Activated CD4-positive, alpha-beta T cell treated with anti-CD3 and anti-CD28 coated beads, Interleukin-2, amount 10 ng/mL, durations not matched to agents 24 days and 14 days (primary cell): ENCODE measurements at regions of chr16 and their contacts with region 1.

Region 1: GRCh38 chr16:3880623-3881498 is at the start of gene CREBBP:
- DNase-seq: peak; percentile 97
- H3K4me3 Mint-ChIP-seq: peak within 1 kb of the TSS; percentile 84
- H3K27ac Mint-ChIP-seq: peak within 1 kb of the TSS; percentile 90
- H3K4me1 Mint-ChIP-seq: peaks cover 39% of the 10 kb centered on the region
- H3K27me3 Mint-ChIP-seq: peaks cover 11% of the 10 kb centered on the region
- total RNA-seq, gene CREBBP: 42.3 and 45.3 TPM in 2 replicates

Region 2: GRCh38 chr16:3717235-3718018 is 163.4 kb before region 1 on chr16 and contains the start of gene TRAP1:
- intact Hi-C with region 1: loop called (anchors 1 kb)
- DNase-seq: peak; percentile 97
- H3K4me3 Mint-ChIP-seq: peak within 1 kb of the TSS; percentile 94
- H3K27ac Mint-ChIP-seq: peak within 1 kb of the TSS; percentile 94
- H3K4me1 Mint-ChIP-seq: peaks cover 30% of the 10 kb centered on the region
- H3K27me3 Mint-ChIP-seq: no peaks in the 10 kb centered on the region
- total RNA-seq, gene TRAP1: 394 and 421 TPM in 2 replicates